ENCODE measurements at regions of chr9 and their contacts with region 1.

Region 1: DNA sequence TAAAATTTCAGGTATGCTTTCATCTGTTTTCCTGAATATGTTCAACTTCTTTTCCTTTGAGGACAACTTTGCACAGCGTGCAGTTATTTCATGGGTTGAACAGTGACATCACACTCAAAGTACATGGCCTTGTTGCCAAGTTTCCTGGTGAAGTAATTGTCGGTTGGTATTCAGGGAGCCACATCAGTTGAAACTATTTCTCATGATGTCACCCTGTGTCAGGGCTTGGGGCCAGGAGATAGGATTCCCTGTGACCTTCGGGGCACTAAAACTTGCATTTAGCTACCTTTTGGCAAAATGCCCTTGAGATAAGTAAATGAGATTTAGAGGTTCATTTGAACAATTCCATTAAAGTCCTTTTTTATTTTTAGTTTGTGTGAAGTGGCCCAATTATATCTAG is 383.9 kb downstream of the SH3GL2 start:
- DNase-seq: peak in 1 of 2 donors; percentile 62
- H3K4me3 ChIP-seq: no peak overlapping the region
- H3K27ac ChIP-seq: no peak overlapping the region
- H3K4me1 ChIP-seq: peaks cover 0 to 2% of the 10 kb centered on the region in 2 donors
- H3K27me3 ChIP-seq: no peaks in the 10 kb centered on the region
- CTCF ChIP-seq: no peak

Region 2: DNA sequence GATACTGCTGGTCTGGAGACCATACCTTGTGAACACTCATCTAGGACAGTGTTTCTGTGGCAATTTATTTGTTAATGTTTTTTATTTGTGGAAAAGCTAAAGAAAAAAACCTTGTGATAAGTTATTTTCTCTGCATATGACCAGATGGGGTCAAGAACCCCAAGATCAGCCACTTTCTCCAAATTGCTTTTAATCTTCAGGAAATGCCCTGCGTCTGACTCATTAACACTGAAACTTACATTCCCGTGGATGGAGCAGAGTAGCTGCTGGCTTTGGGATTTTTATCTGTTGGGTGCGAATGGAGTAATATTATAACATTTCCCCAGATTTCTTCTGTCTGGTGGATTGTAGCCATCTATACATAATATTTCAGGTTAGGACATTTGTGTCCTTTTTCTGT is 60.6 kb after region 1 on chr9:
- intact Hi-C with region 1: loop called (anchors 10 kb)
- DNase-seq: no peak
- H3K4me3 ChIP-seq: no peak overlapping the region
- H3K27ac ChIP-seq: peak overlapping the region; percentile 41 to 44
- H3K4me1 ChIP-seq: peaks cover 0 to 2% of the 10 kb centered on the region in 2 donors
- H3K27me3 ChIP-seq: no peaks in the 10 kb centered on the region
- CTCF ChIP-seq: no peak

Measured in ascending aorta (tissue), 2 donors.